GM12878 (cell line): ENCODE measurements at regions of chrX and their contacts with region 1.

Region 1: DNA sequence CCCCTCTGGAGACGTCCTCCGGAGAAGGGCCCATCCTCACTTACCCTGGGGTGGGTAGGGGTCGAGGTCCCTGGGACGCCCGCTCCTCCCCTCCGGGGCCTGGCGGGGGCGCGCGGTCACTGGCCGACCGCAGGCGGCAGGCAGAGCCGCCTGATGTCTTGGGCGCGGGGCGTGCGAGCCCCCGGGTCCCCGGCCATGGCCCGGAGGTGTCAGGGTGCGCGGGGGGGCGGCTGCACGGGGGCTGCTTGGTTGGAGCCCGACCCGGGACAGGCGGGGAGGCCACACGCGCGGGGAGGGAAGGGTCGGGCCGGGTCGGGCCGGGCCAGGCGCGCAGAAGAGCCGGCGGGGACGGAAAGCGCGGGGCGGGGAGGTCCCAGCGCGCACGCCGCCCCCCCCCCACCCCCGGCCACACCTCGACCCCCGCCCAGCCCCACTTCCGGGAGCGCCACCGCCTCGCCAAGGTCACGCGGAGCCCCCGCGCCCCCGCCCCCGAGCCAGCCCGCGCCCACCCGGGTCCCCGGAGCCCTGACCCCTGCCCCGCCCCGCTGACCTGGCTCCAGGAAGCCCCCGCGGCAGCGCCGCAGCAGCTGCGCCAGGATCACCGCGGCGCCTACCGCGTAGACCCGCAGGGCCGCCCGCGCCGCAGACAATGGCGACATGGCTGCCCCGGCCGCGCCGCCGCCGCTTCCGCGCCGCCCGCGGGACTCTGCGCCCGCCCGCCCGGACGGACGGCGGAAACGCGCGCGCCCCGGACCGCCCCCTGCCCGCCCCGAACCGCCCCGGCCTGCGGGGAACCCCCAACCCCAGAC is at the starts of genes DHRSX and ZBED1:
- DNase-seq: no peak
- ATAC-seq: peak; percentile 77
- H3K4me3 ChIP-seq: peak within 1 kb of the TSS; percentile 90
- H3K27ac ChIP-seq: peak within 1 kb of the TSS; percentile 88
- H3K4me1 ChIP-seq: peaks cover 22% of the 10 kb centered on the region
- H3K27me3 ChIP-seq: no peaks in the 10 kb centered on the region
- CTCF ChIP-seq: peak; percentile 7 to 35 (median 13); a peak in 3 of 6 replicates
- EP300 ChIP-seq: no peak
- POLR2A ChIP-seq: peak; percentile 88
- RAD21 ChIP-seq: peak; percentile 40; the same call in 1 of the 2 replicates
- polyA plus RNA-seq, gene DHRSX: 1.7 to 3.3 TPM
- polyA plus RNA-seq, gene ZBED1: 1.9 to 4.8 TPM

Region 2: DNA sequence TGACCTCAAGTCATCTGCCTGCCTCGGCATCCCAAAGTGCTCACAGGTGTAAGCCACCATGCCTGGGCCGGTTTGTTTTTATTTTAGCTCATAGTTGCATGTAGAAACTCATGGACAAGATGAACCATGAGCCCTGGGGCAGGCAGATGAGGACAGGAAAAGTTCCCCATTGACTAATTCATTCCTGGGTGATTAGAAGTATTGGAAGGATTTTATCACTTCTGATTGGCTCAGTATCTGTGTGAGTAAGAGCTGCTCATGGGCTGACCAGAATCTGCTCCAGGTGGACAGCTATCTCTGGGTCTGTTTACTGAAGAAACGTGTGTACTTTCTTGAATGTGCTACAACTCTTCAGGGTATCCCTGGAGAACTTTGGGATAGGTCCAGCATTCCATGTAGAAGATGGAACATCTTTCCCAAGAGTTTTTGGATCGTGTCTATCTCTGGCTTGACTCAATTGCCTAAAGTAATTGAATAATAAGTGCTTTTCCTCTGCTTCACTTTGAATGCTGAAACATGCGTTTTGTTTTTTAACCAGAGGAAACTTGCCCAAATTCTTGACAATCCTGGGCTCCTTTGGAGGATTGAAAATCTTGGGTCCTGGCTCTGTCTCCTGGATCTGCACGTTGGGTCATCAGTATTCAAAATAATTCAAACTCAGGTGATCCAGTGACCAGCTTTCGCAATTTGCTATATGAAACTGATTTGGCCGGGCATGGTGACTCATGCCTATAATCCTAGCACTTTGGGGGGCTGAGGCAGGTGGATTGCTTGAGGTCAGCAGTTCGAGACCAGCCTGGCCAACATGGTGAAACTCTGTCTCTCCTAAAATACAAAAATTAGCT is 88.9 kb after region 1 on chrX:
- CTCF ChIA-PET with region 1: no interaction called
- POLR2A ChIA-PET with region 1: no interaction called
- RAD21 ChIA-PET with region 1: no interaction called
- SMC1A ChIA-PET with region 1: no interaction called
- in situ Hi-C with region 1: no loop called
- intact Hi-C with region 1: loop called (anchors 2 kb)
- DNase-seq: no peak
- ATAC-seq: no peak
- H3K4me3 ChIP-seq: no peak overlapping the region
- H3K27ac ChIP-seq: no peak overlapping the region
- H3K4me1 ChIP-seq: no peaks in the 10 kb centered on the region
- H3K27me3 ChIP-seq: peaks cover 2 to 7% of the 10 kb centered on the region in 2 experiments; a peak in 3 of 4 replicates
- CTCF ChIP-seq: no peak
- EP300 ChIP-seq: no peak
- POLR2A ChIP-seq: no peak
- RAD21 ChIP-seq: no peak

Region 3: DNA sequence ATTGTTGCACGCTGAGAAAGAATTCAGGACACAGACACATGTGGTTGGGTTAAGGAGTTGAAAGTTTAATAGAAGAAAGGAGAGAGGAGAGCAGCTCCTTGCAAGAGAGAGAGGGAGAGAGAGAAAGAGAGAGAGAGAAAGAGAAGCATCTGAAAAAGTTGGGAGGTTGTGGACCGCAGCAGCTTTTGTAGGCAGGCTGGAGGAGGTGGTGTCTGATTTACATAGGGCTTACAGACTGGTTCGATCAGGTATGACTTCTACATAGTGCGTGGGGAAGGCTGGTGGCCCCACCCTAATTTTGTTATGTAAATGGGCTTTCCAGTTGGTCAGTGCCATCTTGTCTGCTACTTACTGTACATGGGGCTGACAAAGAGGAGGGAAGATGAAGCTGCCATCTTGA is 300.8 kb after region 1 on chrX:
- CTCF ChIA-PET with region 1: no interaction called
- POLR2A ChIA-PET with region 1: no interaction called
- RAD21 ChIA-PET with region 1: no interaction called
- SMC1A ChIA-PET with region 1: no interaction called
- in situ Hi-C with region 1: no loop called
- intact Hi-C with region 1: no loop called
- DNase-seq: no peak
- ATAC-seq: no peak
- H3K4me3 ChIP-seq: no peak overlapping the region
- H3K27ac ChIP-seq: no peak overlapping the region
- H3K4me1 ChIP-seq: no peaks in the 10 kb centered on the region
- H3K27me3 ChIP-seq: no peaks in the 10 kb centered on the region
- CTCF ChIP-seq: no peak
- EP300 ChIP-seq: no peak
- POLR2A ChIP-seq: no peak
- RAD21 ChIP-seq: no peak